Activated CD8-positive, alpha-beta T cell treated with anti-CD3 and anti-CD28 coated beads for 36 hours (primary cell): ENCODE measurements at regions of chr19 and their contacts with region 1.

Region 1: DNA sequence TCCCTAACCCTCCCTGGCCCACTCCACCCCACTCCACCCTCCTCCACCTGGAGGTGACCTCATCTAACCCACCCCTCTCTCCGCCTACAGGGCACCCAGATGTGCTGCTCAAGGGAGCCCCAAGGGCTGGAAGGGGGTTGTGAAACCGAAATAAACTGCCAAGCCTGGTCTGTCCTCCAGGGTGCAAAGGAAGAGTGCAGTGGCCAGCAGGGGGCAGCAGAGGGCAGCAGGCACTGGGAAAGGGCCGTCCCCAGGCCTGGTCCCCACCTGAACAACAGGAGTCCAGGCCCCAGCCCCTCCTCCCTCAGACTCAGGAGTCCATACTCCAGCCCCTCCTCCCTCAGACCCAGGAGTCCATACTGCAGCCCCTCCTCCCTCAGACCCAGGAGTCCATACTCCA is 8.4 kb upstream of the BCAM start:
- DNase-seq: peak; percentile 91
- ATAC-seq: peak; percentile 99
- H3K4me3 Mint-ChIP-seq: no peak overlapping the region
- H3K27ac Mint-ChIP-seq: no peak overlapping the region
- H3K4me1 Mint-ChIP-seq: peaks cover 9% of the 10 kb centered on the region
- H3K27me3 Mint-ChIP-seq: no peaks in the 10 kb centered on the region
- CTCF ChIP-seq: peak; percentile 79

Region 2: DNA sequence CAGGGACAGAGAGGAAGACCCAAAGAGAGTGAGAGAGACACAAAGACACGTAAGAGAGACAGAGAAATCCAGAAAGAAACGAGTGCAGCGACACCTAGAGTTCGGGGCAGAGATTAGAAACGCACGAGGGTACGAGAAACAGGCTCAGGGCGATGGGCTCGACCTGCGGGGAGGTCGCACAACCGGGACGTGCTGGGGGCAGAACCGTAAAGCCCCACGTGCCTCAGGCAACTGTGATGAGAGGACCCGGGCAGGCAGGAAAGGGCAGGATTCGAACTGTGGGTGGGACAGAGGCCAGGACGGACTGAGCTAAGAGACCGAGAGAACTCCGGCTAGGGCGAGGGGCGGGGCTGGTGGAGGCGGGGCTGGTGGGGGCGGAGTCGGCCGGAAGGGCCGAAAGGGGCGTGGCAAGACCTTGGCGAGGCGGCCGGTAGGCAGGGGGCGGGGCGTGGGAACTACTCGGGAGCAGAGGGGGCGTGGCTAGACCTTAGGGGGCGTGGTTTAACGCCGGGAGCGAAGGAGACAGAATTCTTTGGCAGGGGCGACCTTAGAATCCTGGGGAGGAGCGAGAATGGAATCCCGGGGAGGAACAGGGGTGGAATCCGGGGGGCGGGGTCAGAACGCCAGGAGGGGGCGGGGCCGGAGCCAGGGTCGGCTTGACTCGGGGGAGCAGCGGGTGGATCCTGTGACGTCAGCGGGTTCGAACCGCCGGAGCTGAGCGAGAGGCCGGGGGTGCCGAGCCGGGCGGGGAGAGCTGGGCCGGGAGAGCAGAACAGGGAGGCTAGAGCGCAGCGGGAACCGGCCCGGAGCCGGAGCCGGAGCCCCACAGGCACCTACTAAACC is 45.4 kb after region 1 on chr19 and contains the start of gene NECTIN2:
- CTCF ChIA-PET with region 1: interaction called, 6 read pairs
- POLR2A ChIA-PET with region 1: no interaction called
- intact Hi-C with region 1: loop called (anchors 2 kb)
- DNase-seq: peak; percentile 95
- ATAC-seq: peak; percentile 83
- H3K4me3 Mint-ChIP-seq: peak within 1 kb of the TSS; percentile 76
- H3K27ac Mint-ChIP-seq: peak within 1 kb of the TSS; percentile 76
- H3K4me1 Mint-ChIP-seq: peaks cover 20% of the 10 kb centered on the region
- H3K27me3 Mint-ChIP-seq: peaks cover 25% of the 10 kb centered on the region
- CTCF ChIP-seq: no peak
- total RNA-seq, gene NECTIN2: 0.36 to 0.65 TPM